Heart right ventricle (tissue), 16 donors: ENCODE measurements at regions of chr5 and their contacts with region 1.

Region 1: GRCh38 chr5:172860520-172861443 is 26.7 kb downstream of the ERGIC1 start:
- DNase-seq: peak; percentile 88 to 92
- ATAC-seq: peak; percentile 86 to 94 (median 90)
- H3K4me3 ChIP-seq: peak overlapping the region in 7 of 10 donors; percentile 1 to 39 (median 20)
- H3K27ac ChIP-seq: peak overlapping the region; percentile 86 to 97 (median 92)
- H3K4me1 ChIP-seq: peaks cover 41 to 82% (median 65%) of the 10 kb centered on the region in 9 donors
- H3K27me3 ChIP-seq: no peaks in the 10 kb centered on the region
- CTCF ChIP-seq: no peak

Region 2: DNA sequence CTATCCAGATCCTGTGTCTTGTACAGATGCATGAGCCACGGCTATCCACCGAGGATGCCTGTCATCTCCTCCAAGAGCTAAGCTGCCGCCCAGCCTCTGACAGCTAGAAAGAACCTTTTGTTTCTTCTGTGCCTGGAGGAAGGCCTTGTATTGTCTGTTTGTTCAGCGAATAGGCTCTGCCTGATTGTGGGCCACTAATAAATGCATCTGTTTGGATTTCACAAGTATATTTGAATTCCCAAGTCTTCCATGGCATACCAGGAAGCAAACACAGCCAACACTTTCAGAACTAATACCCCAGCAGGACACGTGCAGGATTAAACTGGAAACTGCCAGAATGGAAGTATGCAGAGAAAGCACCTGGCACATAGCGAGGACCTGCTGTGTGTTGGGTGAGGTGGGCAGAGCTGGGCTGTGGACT is 312.5 kb before region 1 on chr5:
- intact Hi-C with region 1: no loop called
- DNase-seq: no peak
- ATAC-seq: no peak
- H3K4me3 ChIP-seq: no peak overlapping the region
- H3K27ac ChIP-seq: no peak overlapping the region
- H3K4me1 ChIP-seq: peaks cover 6 to 25% (median 14%) of the 10 kb centered on the region in 9 donors
- H3K27me3 ChIP-seq: no peaks in the 10 kb centered on the region
- CTCF ChIP-seq: no peak

Region 3: GRCh38 chr5:172897481-172898217 is 36.9 kb after region 1 on chr5:
- intact Hi-C with region 1: loop called in 5 of 10 experiments (anchors 2 to 10 kb)
- DNase-seq: peak in 1 of 2 donors; percentile 55
- ATAC-seq: peak in 5 of 8 donors; percentile 19 to 59 (median 32)
- H3K4me3 ChIP-seq: peak overlapping the region in 5 of 10 donors; percentile 9 to 42 (median 34)
- H3K27ac ChIP-seq: peak overlapping the region in 9 of 10 donors; percentile 40 to 98 (median 90)
- H3K4me1 ChIP-seq: peaks cover 21 to 67% (median 56%) of the 10 kb centered on the region in 9 donors
- H3K27me3 ChIP-seq: no peaks in the 10 kb centered on the region
- CTCF ChIP-seq: no peak